PC-3 (cell line): ENCODE measurements at regions of chr21 and their contacts with region 1.

Region 1: GRCh38 chr21:33428669-33429068 is 25.5 kb downstream of the IFNGR2 start:
- DNase-seq: peak; percentile 95
- ATAC-seq: peak; percentile 78
- H3K4me3 ChIP-seq: peak overlapping the region; percentile 9; the same call in 1 of the 2 replicates
- H3K27ac ChIP-seq: peak overlapping the region; percentile 99
- H3K4me1 ChIP-seq: peaks cover 33% of the 10 kb centered on the region
- H3K27me3 ChIP-seq: no peaks in the 10 kb centered on the region
- CTCF ChIP-seq: no peak

Region 2: GRCh38 chr21:33403779-33404585 is 24.7 kb before region 1 on chr21:
- CTCF ChIA-PET with region 1: no interaction called
- POLR2A ChIA-PET with region 1: interaction called, 10 read pairs
- intact Hi-C with region 1: loop called (anchors 2 kb)
- DNase-seq: peak; percentile 41
- ATAC-seq: peak; percentile 55
- H3K4me3 ChIP-seq: peak overlapping the region; percentile 85
- H3K27ac ChIP-seq: peak overlapping the region; percentile 84
- H3K4me1 ChIP-seq: peaks cover 20% of the 10 kb centered on the region
- H3K27me3 ChIP-seq: no peaks in the 10 kb centered on the region
- CTCF ChIP-seq: no peak